ENCODE measurements at regions of chr6 and their contacts with region 1.

Region 1: DNA sequence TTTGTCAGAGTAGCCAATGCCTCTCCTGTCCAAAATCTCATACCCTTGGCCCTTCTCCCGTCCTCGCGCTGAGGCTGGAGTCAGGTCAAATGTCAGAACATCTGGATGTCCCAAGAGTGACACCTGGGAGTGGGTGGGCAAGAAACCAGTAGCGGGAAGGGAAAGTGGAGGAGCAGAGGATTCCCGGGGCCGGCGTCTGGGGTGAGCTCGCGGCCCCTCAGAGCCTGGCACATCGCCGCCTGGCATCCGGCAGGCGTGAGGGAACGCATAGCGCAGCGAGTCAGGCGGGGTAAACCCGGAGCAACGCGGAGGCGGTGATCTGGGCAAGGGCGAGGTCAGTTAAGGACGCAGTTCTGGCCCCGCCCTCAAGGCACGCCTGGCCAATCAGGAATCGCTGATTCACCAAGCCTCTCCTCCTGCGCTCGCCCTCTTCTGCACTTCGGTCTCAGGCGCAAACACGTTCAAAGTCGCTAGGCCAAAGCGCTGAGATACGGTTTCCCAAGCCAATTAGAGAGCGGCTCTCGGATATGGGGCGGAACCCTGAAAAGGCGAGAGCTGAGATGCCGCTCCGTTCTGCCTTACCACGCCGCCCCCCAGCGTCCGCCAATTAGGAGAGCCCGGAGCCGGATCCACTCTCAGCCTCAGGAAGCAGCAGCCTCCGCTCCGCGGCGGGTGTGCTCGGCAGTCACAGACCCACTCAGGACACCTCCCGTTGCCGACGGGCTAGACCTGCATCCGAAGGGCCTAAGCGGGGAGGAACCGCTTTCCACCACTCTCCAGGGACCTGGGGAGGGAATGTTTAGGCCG is 22.5 kb downstream of the VPS52 start:
- DNase-seq: peak; percentile 99
- H3K4me3 Mint-ChIP-seq: peak overlapping the region; percentile 90
- H3K27ac Mint-ChIP-seq: peak overlapping the region; percentile 93
- H3K4me1 Mint-ChIP-seq: peaks cover 37% of the 10 kb centered on the region
- H3K27me3 Mint-ChIP-seq: no peaks in the 10 kb centered on the region

Region 2: DNA sequence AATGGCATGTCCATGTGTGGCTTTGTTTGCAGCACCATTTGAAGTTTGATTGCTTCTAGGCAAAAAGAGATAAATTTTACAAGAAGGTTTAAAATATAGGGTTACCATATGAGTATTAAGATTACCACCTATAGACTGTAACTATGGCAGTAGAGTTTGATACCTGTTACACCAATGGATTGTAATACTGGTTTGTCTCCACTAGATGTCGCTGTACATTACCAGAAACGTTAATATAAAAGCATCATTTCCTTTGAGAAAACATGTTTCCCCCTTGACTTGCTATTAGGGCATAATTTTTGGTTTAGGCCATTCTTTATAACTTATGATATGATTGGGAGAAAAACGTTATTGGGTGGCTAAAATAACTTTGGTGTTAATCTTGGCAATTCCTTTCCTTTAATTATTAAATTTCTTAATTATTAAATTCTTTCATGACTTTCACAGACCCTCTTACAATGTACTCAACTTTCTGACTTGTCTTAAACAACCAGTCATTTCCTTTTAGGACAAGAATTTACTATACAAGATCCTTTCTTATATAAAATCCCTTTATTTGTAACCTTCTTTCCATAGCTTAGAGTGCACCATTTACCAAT is 130.5 kb before region 1 on chr6:
- CTCF ChIA-PET with region 1: interaction called, 43 read pairs
- intact Hi-C with region 1: loop called (anchors 1 kb)
- DNase-seq: no peak
- H3K4me3 Mint-ChIP-seq: no peak overlapping the region
- H3K27ac Mint-ChIP-seq: no peak overlapping the region
- H3K4me1 Mint-ChIP-seq: peaks cover 7% of the 10 kb centered on the region
- H3K27me3 Mint-ChIP-seq: peaks cover 37% of the 10 kb centered on the region

Region 3: DNA sequence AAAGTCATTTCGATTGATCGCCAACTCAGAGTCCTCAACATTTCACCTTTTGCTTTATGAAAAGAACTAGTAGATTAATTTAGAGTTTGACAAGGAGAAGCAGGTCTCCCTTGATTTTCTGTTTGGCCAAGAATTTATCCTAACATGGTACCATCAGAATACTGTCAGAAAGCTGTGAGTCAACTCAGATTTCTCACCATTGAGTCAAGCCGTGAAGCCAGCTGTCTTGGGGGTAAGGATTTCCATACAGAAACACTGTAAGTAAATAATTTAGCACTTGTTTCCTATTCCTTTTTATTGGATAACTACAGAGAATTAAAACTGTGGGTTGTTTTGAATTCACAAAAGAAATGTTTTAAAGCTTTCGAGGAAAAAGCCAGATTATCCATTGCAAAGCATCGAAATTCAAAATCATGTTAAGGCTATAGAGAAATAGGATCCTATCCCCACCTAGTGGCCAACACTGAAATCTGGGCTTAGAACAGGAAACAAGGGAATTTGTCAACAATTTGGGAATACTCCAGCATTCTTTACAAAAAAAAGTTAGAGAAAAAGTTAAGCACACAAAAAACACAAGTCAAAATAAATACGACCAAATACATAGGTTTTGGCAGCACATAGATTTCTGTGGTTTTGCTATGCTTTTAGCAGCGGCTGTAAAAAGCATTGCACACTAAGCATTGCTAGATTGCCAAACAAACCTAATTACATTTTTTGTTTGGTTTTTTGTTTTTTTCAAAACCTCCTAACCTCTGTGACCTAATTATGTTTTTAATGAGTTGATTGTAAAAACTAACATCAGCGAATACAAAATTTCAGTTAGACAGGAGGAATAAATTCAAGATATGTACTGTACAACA is 101.1 kb before region 1 on chr6:
- CTCF ChIA-PET with region 1: interaction called, 10 read pairs
- intact Hi-C with region 1: no loop called
- DNase-seq: no peak
- H3K4me3 Mint-ChIP-seq: no peak overlapping the region
- H3K27ac Mint-ChIP-seq: no peak overlapping the region
- H3K4me1 Mint-ChIP-seq: no peaks in the 10 kb centered on the region
- H3K27me3 Mint-ChIP-seq: peaks cover 9% of the 10 kb centered on the region

Region 4: GRCh38 chr6:33200219-33201146 is 48.6 kb before region 1 on chr6 and contains the starts of genes RXRB and SLC39A7:
- CTCF ChIA-PET with region 1: interaction called, 9 read pairs
- intact Hi-C with region 1: loop called (anchors 1 kb)
- DNase-seq: peak; percentile 100
- H3K4me3 Mint-ChIP-seq: peak within 1 kb of the TSS; percentile 98
- H3K27ac Mint-ChIP-seq: peak within 1 kb of the TSS; percentile 97
- H3K4me1 Mint-ChIP-seq: peaks cover 60% of the 10 kb centered on the region
- H3K27me3 Mint-ChIP-seq: no peaks in the 10 kb centered on the region
- total RNA-seq, gene RXRB: 50.4 to 50.6 TPM
- total RNA-seq, gene SLC39A7: 35.9 to 39.5 TPM

Region 5: GRCh38 chr6:33271458-33272274 is 22.5 kb after region 1 on chr6 and contains the starts of genes RPS18 and VPS52:
- CTCF ChIA-PET with region 1: interaction called, 9 read pairs
- intact Hi-C with region 1: loop called (anchors 1 kb)
- DNase-seq: peak; percentile 95
- H3K4me3 Mint-ChIP-seq: peak within 1 kb of the TSS; percentile 99
- H3K27ac Mint-ChIP-seq: peak within 1 kb of the TSS; percentile 100
- H3K4me1 Mint-ChIP-seq: peaks cover 45% of the 10 kb centered on the region
- H3K27me3 Mint-ChIP-seq: no peaks in the 10 kb centered on the region
- total RNA-seq, gene RPS18: 5,497 to 5,551 TPM
- total RNA-seq, gene VPS52: 30.3 to 31.0 TPM

Region 6: GRCh38 chr6:33299237-33299944 is 50.3 kb after region 1 on chr6:
- CTCF ChIA-PET with region 1: interaction called, 3 read pairs
- intact Hi-C with region 1: loop called (anchors 1 kb)
- DNase-seq: peak; percentile 96
- H3K4me3 Mint-ChIP-seq: peak overlapping the region; percentile 85
- H3K27ac Mint-ChIP-seq: peak overlapping the region; percentile 98
- H3K4me1 Mint-ChIP-seq: peaks cover 29% of the 10 kb centered on the region
- H3K27me3 Mint-ChIP-seq: no peaks in the 10 kb centered on the region

Region 7: GRCh38 chr6:33323623-33323948 is 74.5 kb after region 1 on chr6:
- CTCF ChIA-PET with region 1: no interaction called
- intact Hi-C with region 1: loop called (anchors 1 kb)
- DNase-seq: no peak
- H3K4me3 Mint-ChIP-seq: peak overlapping the region; percentile 95
- H3K27ac Mint-ChIP-seq: peak overlapping the region; percentile 98
- H3K4me1 Mint-ChIP-seq: peaks cover 43% of the 10 kb centered on the region
- H3K27me3 Mint-ChIP-seq: no peaks in the 10 kb centered on the region

Region 8: DNA sequence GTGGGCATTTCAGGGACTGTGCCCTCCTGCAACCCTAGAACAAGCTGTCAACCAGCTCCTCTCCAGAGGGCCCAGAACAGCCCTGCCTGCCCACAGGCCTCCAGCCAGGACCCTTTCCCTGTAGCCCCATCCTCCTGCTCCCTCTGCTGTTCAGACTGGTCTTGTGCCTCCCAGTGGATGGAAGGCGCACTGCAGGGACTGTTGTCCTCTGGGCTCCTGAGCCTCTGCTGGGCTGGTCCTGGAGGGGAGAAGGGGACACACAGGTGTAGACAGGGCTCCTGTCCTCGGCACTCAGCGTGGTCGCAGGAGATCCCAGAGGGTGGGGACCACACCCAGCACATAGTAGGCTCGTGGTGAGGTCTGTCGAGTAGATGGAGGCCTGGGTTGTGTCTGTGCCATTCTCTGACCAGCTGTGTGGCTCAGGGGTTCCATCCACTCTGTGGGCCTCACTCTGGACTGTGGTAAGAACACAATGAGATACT is 383.5 kb after region 1 on chr6:
- CTCF ChIA-PET with region 1: no interaction called
- intact Hi-C with region 1: no loop called
- DNase-seq: peak; percentile 70
- H3K4me3 Mint-ChIP-seq: peak overlapping the region; percentile 43
- H3K27ac Mint-ChIP-seq: no peak overlapping the region
- H3K4me1 Mint-ChIP-seq: peaks cover 64% of the 10 kb centered on the region
- H3K27me3 Mint-ChIP-seq: no peaks in the 10 kb centered on the region